ENCODE measurements at regions of chr5 and their contacts with region 1.

Region 1: GRCh38 chr5:159316519-159317383 is 13.5 kb downstream of the IL12B start:
- DNase-seq: peak; percentile 60 to 79
- ATAC-seq: peak; percentile 93 to 98
- H3K4me3 ChIP-seq: no peak overlapping the region
- H3K27ac ChIP-seq: no peak overlapping the region
- H3K4me1 ChIP-seq: no peaks in the 10 kb centered on the region
- CTCF ChIP-seq: peak; percentile 77
- EP300 ChIP-seq: no peak
- POLR2A ChIP-seq: no peak
- RAD21 ChIP-seq: peak; percentile 85 to 88

Region 2: DNA sequence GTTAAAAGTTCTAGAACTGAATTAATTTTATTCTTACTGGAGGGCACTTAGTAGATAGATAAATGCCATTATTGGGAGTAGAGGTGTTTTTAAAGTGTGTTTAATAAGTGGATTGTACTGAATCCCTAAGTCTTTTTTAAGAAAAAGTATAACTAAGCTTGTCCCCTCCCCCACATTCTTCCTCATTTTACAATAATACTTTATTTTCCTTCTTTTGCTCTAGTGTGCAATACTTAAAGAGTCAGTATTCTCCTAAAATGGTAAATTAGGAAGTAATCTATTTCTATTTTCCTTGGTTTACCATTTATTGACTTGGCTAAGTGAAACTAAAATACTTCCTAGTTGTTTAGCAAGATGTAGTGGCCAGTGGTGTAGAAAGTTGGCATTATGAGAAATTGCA is 42.1 kb before region 1 on chr5:
- CTCF ChIA-PET with region 1: interaction called, 15 read pairs
- POLR2A ChIA-PET with region 1: no interaction called
- DNase-seq: no peak
- ATAC-seq: no peak
- H3K4me3 ChIP-seq: no peak overlapping the region
- H3K27ac ChIP-seq: no peak overlapping the region
- H3K4me1 ChIP-seq: no peaks in the 10 kb centered on the region
- CTCF ChIP-seq: no peak
- EP300 ChIP-seq: no peak
- POLR2A ChIP-seq: no peak
- RAD21 ChIP-seq: no peak

Region 3: GRCh38 chr5:159286420-159287035 is 30.2 kb before region 1 on chr5:
- CTCF ChIA-PET with region 1: interaction called, 10 read pairs
- POLR2A ChIA-PET with region 1: no interaction called
- DNase-seq: peak in 1 of 2 experiments; percentile 35
- ATAC-seq: peak in 1 of 2 experiments; percentile 57; a peak in 2 of 6 replicates
- H3K4me3 ChIP-seq: no peak overlapping the region
- H3K27ac ChIP-seq: no peak overlapping the region
- H3K4me1 ChIP-seq: no peaks in the 10 kb centered on the region
- CTCF ChIP-seq: peak; percentile 61
- EP300 ChIP-seq: no peak
- POLR2A ChIP-seq: no peak
- RAD21 ChIP-seq: peak; percentile 71 to 72

Region 4: GRCh38 chr5:159304961-159305595 is 11.7 kb before region 1 on chr5:
- CTCF ChIA-PET with region 1: interaction called, 22 read pairs
- POLR2A ChIA-PET with region 1: no interaction called
- DNase-seq: no peak
- ATAC-seq: no peak
- H3K4me3 ChIP-seq: no peak overlapping the region
- H3K27ac ChIP-seq: no peak overlapping the region
- H3K4me1 ChIP-seq: no peaks in the 10 kb centered on the region
- CTCF ChIP-seq: no peak
- EP300 ChIP-seq: no peak
- POLR2A ChIP-seq: no peak
- RAD21 ChIP-seq: no peak

Region 5: DNA sequence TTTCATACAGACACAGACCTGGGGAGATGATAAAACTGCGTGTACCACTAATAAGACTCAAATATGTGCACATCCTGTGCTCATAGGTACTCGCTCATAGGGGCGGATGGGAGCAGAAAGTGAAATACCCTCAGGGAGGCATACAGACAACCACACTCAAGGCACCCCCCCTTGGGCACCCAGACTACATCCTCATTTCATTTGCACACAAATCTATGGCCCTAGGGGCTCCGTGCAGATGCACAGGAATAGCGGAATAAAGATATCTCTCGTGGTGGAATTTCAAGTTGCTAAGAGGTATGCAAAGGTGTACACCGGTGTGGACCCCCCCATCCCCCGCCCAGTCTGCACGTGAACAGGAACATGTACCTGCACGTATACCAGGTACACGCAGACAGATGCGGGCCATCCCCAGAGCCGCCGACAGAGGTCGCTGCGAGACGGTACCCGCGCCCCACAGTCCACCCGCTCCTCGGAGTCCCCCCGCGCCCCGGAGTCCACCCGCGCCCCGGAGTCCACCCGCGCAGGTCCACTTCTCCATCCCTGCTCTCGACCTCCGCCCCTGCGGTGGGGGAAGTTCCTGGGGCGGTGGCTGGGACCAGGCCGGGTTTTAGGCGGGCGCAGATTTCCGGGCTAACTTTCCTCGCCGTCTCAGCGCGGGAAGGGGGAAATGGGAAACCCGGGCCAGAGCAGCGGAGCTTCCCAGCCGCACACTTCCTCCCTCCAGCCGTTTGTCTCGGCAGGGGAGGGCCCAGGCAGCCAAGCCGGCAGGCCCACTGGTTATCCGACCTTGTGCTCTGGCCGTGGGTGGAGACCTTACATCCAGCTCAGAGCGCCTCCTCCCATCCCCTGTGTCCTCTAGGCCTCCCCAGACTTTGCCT is 14.6 kb after region 1 on chr5:
- CTCF ChIA-PET with region 1: interaction called, 20 read pairs
- POLR2A ChIA-PET with region 1: no interaction called
- DNase-seq: peak; percentile 71 to 76
- ATAC-seq: peak; percentile 95 to 96
- H3K4me3 ChIP-seq: peak overlapping the region; percentile 53
- H3K27ac ChIP-seq: peak overlapping the region; percentile 88 to 96
- H3K4me1 ChIP-seq: peaks cover 21% of the 10 kb centered on the region; the same call in 2 of the 3 replicates
- CTCF ChIP-seq: peak; percentile 74
- EP300 ChIP-seq: no peak
- POLR2A ChIP-seq: no peak
- RAD21 ChIP-seq: peak; percentile 63 to 82

Region 6: GRCh38 chr5:159341914-159342313 is 25.2 kb after region 1 on chr5:
- CTCF ChIA-PET with region 1: interaction called, 11 read pairs
- POLR2A ChIA-PET with region 1: no interaction called
- DNase-seq: peak; percentile 61 to 76
- ATAC-seq: peak; percentile 79 to 80
- H3K4me3 ChIP-seq: no peak overlapping the region
- H3K27ac ChIP-seq: peak overlapping the region; percentile 8 to 65; a peak in 4 of 6 replicates
- H3K4me1 ChIP-seq: peaks cover 34% of the 10 kb centered on the region
- CTCF ChIP-seq: no peak
- EP300 ChIP-seq: peak in 1 of 2 experiments; percentile 17; a peak in 1 of 5 replicates
- POLR2A ChIP-seq: no peak
- RAD21 ChIP-seq: no peak

Region 7: DNA sequence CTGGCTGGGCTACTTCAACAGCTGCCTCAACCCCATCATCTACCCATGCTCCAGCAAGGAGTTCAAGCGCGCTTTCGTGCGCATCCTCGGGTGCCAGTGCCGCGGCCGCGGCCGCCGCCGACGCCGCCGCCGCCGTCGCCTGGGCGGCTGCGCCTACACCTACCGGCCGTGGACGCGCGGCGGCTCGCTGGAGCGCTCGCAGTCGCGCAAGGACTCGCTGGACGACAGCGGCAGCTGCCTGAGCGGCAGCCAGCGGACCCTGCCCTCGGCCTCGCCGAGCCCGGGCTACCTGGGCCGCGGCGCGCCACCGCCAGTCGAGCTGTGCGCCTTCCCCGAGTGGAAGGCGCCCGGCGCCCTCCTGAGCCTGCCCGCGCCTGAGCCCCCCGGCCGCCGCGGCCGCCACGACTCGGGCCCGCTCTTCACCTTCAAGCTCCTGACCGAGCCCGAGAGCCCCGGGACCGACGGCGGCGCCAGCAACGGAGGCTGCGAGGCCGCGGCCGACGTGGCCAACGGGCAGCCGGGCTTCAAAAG is 655.2 kb after region 1 on chr5:
- CTCF ChIA-PET with region 1: no interaction called
- POLR2A ChIA-PET with region 1: no interaction called
- DNase-seq: no peak
- ATAC-seq: no peak
- H3K4me3 ChIP-seq: no peak overlapping the region
- H3K27ac ChIP-seq: no peak overlapping the region
- H3K4me1 ChIP-seq: peaks cover 17% of the 10 kb centered on the region
- CTCF ChIP-seq: no peak
- EP300 ChIP-seq: no peak
- POLR2A ChIP-seq: no peak
- RAD21 ChIP-seq: no peak

Measured in A549 (cell line).